ENCODE measurements at regions of chr12 and their contacts with region 1.

Region 1: GRCh38 chr12:38138225-38139221 is 178.1 kb upstream of the ALG10B start:
- DNase-seq: peak; percentile 10 to 79 (median 54)
- ATAC-seq: peak; percentile 63
- H3K4me3 ChIP-seq: peak overlapping the region; percentile 38
- H3K4me3 Mint-ChIP-seq: peak overlapping the region; percentile 80
- H3K27ac ChIP-seq: no peak overlapping the region
- H3K27ac Mint-ChIP-seq: no peak overlapping the region
- H3K4me1 ChIP-seq: peaks cover 12% of the 10 kb centered on the region
- H3K4me1 Mint-ChIP-seq: peaks cover 8% of the 10 kb centered on the region
- H3K27me3 ChIP-seq: peaks cover 8 to 12% of the 10 kb centered on the region in 2 experiments
- H3K27me3 Mint-ChIP-seq: peaks cover 47% of the 10 kb centered on the region
- CTCF ChIP-seq: peak; percentile 99

Region 2: GRCh38 chr12:38316391-38317129 is 178.0 kb after region 1 on chr12 and contains the start of gene ALG10B:
- CTCF ChIA-PET with region 1: no interaction called
- POLR2A ChIA-PET with region 1: no interaction called
- intact Hi-C with region 1: loop called (anchors 1 kb)
- DNase-seq: peak; percentile 86 to 97 (median 90)
- ATAC-seq: peak; percentile 97
- H3K4me3 ChIP-seq: peak within 1 kb of the TSS; percentile 89
- H3K4me3 Mint-ChIP-seq: peak within 1 kb of the TSS; percentile 90
- H3K27ac ChIP-seq: peak within 1 kb of the TSS; percentile 80 to 96
- H3K27ac Mint-ChIP-seq: peak within 1 kb of the TSS; percentile 95
- H3K4me1 ChIP-seq: peaks cover 10% of the 10 kb centered on the region
- H3K4me1 Mint-ChIP-seq: peaks cover 39% of the 10 kb centered on the region
- H3K27me3 ChIP-seq: no peaks in the 10 kb centered on the region
- H3K27me3 Mint-ChIP-seq: no peaks in the 10 kb centered on the region
- CTCF ChIP-seq: peak; percentile 80
- total RNA-seq, gene ALG10B: 6.6 to 10.1 TPM

Region 3: DNA sequence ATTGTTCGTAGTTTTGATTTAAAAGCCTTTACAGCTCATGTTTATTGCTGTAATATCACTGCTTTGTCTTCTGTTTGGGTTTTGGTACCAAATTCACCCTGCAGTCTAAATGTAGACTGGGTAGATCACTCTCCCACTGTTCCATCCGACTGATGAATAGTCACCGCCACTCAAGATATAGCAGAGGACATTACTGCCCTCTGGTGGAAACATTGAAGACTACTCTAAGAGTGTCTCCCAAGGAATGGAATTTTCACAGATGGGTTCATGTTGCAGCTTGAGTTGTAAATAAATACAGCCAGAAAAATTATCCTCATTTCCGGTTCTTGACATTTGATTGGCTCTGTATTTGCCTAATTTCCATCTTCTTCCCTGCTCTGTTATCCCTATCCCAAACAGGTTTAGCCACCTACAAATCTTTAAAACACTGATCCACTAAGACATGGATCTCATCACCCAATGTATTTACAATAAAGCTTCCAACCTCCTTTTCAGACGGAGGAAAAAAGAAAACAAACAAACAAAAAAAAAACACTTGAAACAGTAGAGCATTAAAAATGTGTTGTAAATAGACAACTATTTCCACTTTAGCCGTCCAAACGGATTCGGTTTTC is 965.1 kb after region 1 on chr12:
- CTCF ChIA-PET with region 1: no interaction called
- POLR2A ChIA-PET with region 1: no interaction called
- intact Hi-C with region 1: loop called in 1 of 2 experiments (anchors 10 kb)
- DNase-seq: peak in 4 of 14 experiments; percentile 3 to 59 (median 50)
- ATAC-seq: peak; percentile 51
- H3K4me3 ChIP-seq: no peak overlapping the region
- H3K4me3 Mint-ChIP-seq: no peak overlapping the region
- H3K27ac ChIP-seq: no peak overlapping the region
- H3K27ac Mint-ChIP-seq: no peak overlapping the region
- H3K4me1 ChIP-seq: no peaks in the 10 kb centered on the region
- H3K4me1 Mint-ChIP-seq: no peaks in the 10 kb centered on the region
- H3K27me3 ChIP-seq: no peaks in the 10 kb centered on the region
- H3K27me3 Mint-ChIP-seq: no peaks in the 10 kb centered on the region
- CTCF ChIP-seq: peak; percentile 53

Region 4: DNA sequence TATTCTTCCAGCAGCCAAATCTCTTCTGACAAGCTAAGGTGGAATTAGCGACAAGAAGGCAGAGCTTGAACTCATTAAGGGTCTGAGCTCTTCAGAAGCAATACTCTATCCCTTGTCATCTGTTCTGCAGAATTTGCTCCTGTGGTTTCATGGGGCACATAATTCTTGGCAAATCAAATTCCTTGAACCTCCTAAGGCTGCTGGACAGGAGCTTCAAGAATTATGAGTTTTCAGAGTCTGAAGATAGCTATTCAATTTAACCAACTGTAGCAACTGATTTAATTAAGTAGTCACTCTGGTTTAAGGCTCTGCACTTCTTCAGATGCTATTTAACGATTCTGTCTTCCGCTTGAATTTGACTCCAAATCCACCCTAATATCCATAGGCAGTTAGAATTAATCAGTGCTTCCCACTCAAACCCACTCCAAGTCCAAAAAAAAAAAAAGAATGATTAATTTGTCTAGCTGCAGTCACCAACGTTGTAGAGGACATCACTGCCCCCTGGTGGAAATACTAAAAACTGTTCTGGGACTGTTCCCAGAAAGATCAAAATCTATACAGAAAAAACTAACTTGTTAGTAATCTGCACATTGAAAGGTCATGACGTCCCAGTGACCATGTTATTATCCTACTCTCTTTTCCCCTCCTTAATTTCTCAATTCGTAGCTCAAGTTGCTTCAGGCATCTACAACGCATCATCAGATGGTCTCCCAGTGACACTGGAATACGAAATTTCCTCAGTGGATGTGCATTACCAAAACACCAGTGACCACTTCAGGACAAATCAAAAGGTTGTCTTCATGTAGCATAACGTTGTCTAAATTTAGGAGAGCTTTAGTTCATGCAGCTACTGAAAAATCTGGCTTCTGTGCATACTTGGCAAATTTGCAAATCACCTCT is 1134.6 kb after region 1 on chr12:
- CTCF ChIA-PET with region 1: no interaction called
- POLR2A ChIA-PET with region 1: no interaction called
- intact Hi-C with region 1: loop called in 1 of 2 experiments (anchors 2 kb)
- DNase-seq: peak in 4 of 14 experiments; percentile 16 to 47 (median 40)
- ATAC-seq: no peak
- H3K4me3 ChIP-seq: no peak overlapping the region
- H3K4me3 Mint-ChIP-seq: no peak overlapping the region
- H3K27ac ChIP-seq: no peak overlapping the region
- H3K27ac Mint-ChIP-seq: no peak overlapping the region
- H3K4me1 ChIP-seq: no peaks in the 10 kb centered on the region
- H3K4me1 Mint-ChIP-seq: no peaks in the 10 kb centered on the region
- H3K27me3 ChIP-seq: peaks cover 0 to 12% of the 10 kb centered on the region in 2 experiments
- H3K27me3 Mint-ChIP-seq: peaks cover 10% of the 10 kb centered on the region
- CTCF ChIP-seq: peak; percentile 76